Cardiac septum (tissue), 1 donor: ENCODE measurements at regions of chr7 and their contacts with region 1.

Region 1: DNA sequence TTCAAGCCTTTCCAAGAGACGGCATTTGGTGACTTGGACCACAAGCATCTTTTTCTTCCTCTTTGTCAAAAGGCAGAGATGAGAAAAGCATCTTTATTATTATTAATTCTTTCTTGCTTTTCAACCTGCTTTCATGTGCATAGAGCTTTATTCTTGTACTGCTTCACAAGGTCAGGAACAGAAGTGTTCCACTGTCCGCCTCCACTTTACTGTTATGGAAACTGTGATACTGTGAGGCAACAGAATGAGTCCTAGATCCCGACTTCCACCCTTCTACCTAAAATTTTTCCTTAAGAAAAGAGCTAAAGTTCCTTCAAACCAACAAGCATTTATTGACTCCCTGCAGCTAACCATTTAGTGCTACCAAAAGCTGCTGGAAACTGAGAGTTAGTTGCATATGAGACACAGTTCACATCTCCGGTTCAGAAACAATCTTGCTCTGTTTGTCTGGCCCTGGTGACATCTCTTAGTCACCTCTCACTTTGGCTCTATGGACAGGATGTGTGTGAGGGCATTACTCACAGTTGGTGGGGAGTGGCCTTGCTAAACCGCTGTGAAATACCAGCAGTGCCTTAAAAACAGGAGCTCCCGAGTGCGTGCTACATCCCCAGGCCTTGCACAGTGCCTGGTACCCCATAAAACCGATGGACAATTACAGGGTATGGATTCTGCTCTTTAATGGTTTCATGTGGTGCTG is 77.1 kb upstream of the TRIL start:
- DNase-seq: no peak

Region 2: GRCh38 chr7:28815369-28815927 is 219.7 kb before region 1 on chr7:
- intact Hi-C with region 1: no loop called
- DNase-seq: no peak

Region 3: DNA sequence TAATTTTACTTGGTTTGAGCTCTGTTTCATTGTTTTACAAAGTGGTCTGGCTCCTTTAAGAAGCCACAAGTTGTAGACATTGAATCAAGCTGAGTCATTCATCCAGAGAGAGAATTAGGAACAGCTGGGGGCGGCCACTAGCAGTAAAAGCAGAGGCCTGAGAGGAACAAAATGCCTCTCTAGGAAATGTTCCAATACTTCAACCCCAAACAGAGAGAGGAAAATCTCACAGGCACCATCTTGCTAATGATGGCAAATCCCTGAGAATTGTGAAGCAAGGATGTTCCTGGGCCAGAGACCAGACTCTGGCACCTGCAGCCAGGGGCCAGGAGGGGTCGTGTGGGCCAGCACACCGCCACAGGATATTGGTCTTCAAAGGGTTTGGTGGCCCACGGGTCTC is 50.6 kb before region 1 on chr7:
- intact Hi-C with region 1: loop called (anchors 5 kb)
- DNase-seq: no peak

Region 4: GRCh38 chr7:29091715-29092114 is 56.5 kb after region 1 on chr7:
- intact Hi-C with region 1: loop called (anchors 5 kb)
- DNase-seq: no peak

Region 5: GRCh38 chr7:29105752-29106668 is 70.8 kb after region 1 on chr7:
- intact Hi-C with region 1: loop called (anchors 5 kb)
- DNase-seq: no peak